RWPE1 (cell line): ENCODE measurements at regions of chr1 and their contacts with region 1.

Region 1: GRCh38 chr1:119743781-119744597 is 24.7 kb downstream of the HMGCS2 start:
- DNase-seq: peak; percentile 74
- H3K27ac ChIP-seq: peak overlapping the region; percentile 53
- CTCF ChIP-seq: peak; percentile 83

Region 2: GRCh38 chr1:119542492-119542947 is 201.5 kb before region 1 on chr1:
- CTCF ChIA-PET with region 1: no interaction called
- POLR2A ChIA-PET with region 1: no interaction called
- DNase-seq: no peak
- H3K27ac ChIP-seq: no peak overlapping the region
- CTCF ChIP-seq: no peak

Region 3: GRCh38 chr1:119766374-119766794 is 22.4 kb after region 1 on chr1:
- CTCF ChIA-PET with region 1: no interaction called
- POLR2A ChIA-PET with region 1: no interaction called
- DNase-seq: no peak
- H3K27ac ChIP-seq: no peak overlapping the region
- CTCF ChIP-seq: no peak

Region 4: GRCh38 chr1:119808972-119809550 is 65.1 kb after region 1 on chr1:
- CTCF ChIA-PET with region 1: interaction called, 17 read pairs
- POLR2A ChIA-PET with region 1: no interaction called
- DNase-seq: peak; percentile 68
- H3K27ac ChIP-seq: no peak overlapping the region
- CTCF ChIP-seq: peak; percentile 92